CD4-positive, alpha-beta T cell (primary cell): ENCODE measurements at regions of chr2 and their contacts with region 1.

Region 1: DNA sequence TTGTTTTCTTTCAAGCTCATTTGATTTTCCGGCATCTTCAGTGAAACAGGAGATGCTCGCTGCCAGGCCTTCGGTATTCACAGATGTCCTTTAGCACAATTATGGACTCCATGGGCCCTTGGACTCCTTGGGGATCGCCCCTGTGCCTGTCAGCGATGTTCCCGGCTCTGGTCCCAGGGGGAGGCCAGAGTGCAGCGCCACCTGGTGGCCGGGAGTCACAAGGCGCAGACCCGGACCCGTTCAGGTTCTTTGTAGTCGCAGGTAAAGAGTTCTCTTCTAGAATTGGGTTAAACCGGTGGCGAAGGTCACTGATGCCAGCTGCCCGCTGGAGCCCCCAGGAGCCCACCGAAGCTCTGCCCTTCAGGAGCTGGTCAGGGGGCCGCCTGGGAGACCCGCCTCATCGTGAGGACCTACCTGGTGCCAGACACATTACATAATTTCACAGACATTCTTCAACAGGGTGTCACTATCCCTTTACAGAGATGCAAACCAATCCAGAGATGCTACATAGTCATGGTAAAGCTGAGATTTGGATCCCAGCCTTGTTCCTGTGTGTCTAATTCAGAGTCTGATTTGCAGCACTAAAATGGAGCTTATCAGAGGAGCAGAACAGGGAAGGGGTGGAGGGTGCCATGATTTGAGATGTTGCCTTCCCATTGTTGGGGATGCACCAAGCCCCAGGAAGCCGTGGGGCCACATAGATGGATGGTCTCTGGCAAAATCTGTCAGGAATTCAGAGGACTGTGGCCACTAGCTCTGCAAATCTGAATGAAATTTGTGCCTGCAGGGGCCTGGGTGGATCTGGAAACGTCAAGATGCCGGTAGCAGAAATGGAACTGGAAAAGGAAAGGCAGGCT is 6.0 kb upstream of the INPP5D start:
- DNase-seq: peak; percentile 43 to 85 (median 63)
- ATAC-seq: peak; percentile 73
- H3K4me3 ChIP-seq: no peak overlapping the region
- H3K4me3 Mint-ChIP-seq: no peak overlapping the region
- H3K27ac ChIP-seq: no peak overlapping the region
- H3K27ac Mint-ChIP-seq: no peak overlapping the region
- H3K4me1 ChIP-seq: peaks cover 20% of the 10 kb centered on the region
- H3K4me1 Mint-ChIP-seq: peaks cover 15% of the 10 kb centered on the region
- H3K27me3 ChIP-seq: no peaks in the 10 kb centered on the region
- H3K27me3 Mint-ChIP-seq: no peaks in the 10 kb centered on the region
- CTCF ChIP-seq: peak; percentile 98

Region 2: GRCh38 chr2:232604535-232604934 is 449.6 kb before region 1 on chr2:
- CTCF ChIA-PET with region 1: no interaction called
- POLR2A ChIA-PET with region 1: no interaction called
- intact Hi-C with region 1: loop called in 1 of 2 experiments (anchors 2 kb)
- DNase-seq: no peak
- ATAC-seq: no peak
- H3K4me3 ChIP-seq: no peak overlapping the region
- H3K4me3 Mint-ChIP-seq: no peak overlapping the region
- H3K27ac ChIP-seq: no peak overlapping the region
- H3K27ac Mint-ChIP-seq: no peak overlapping the region
- H3K4me1 ChIP-seq: peaks cover 9% of the 10 kb centered on the region
- H3K4me1 Mint-ChIP-seq: peaks cover 9% of the 10 kb centered on the region
- H3K27me3 ChIP-seq: no peaks in the 10 kb centered on the region
- H3K27me3 Mint-ChIP-seq: no peaks in the 10 kb centered on the region
- CTCF ChIP-seq: no peak

Region 3: DNA sequence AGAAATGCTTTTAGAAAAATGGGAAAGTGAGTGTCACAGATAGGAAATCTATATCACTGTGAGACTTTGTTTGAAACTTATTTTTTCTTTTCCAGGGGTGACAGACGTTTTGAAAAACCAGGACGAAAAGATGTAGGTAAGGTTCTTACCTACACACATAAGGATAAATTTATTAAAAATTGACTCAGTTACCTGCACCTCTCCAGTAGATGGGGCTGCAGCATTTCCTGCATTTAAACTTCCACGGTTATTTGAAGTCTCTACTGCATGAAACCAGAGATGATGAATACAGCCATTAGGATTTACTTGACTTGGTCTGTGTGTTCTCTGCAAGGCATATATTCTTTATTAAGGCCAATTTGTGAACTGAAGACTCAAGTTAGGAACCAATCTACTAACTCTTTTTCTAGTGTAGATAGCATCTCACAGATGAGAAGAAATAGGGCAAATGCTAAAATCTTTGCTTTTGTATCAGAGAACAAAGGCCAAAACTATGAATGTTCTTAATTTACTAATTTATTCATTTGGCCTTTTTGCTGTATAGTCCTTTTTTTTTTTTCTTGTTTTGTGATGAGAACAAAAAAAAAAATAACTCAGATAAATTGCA is 292.8 kb before region 1 on chr2:
- CTCF ChIA-PET with region 1: no interaction called
- POLR2A ChIA-PET with region 1: no interaction called
- intact Hi-C with region 1: loop called in 1 of 2 experiments (anchors 5 kb)
- DNase-seq: peak in 10 of 14 experiments; percentile 3 to 65 (median 30)
- ATAC-seq: peak; percentile 76
- H3K4me3 ChIP-seq: no peak overlapping the region
- H3K4me3 Mint-ChIP-seq: no peak overlapping the region
- H3K27ac ChIP-seq: no peak overlapping the region
- H3K27ac Mint-ChIP-seq: no peak overlapping the region
- H3K4me1 ChIP-seq: peaks cover 4% of the 10 kb centered on the region
- H3K4me1 Mint-ChIP-seq: peaks cover 19% of the 10 kb centered on the region
- H3K27me3 ChIP-seq: no peaks in the 10 kb centered on the region
- H3K27me3 Mint-ChIP-seq: no peaks in the 10 kb centered on the region
- CTCF ChIP-seq: peak; percentile 62

Region 4: DNA sequence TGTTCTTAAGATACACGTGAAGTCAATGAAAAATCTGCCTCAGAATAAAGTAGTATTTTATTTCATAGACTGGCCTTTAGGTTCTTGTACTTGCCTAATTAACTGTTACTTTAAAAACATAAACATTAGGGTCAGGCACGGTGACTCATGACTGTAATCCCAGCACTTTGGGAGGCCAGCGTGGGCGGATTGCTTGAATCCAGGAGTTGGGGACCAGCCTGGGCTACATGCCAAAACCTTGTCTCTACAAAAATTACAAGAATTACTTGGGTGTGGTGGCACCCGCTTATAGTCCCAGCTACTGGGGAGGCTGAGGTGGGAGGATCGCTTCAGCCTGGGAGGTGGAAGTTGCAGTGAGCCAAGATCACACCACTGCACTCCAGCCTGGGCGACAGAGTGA is 200.1 kb before region 1 on chr2:
- CTCF ChIA-PET with region 1: no interaction called
- POLR2A ChIA-PET with region 1: no interaction called
- intact Hi-C with region 1: loop called in 1 of 2 experiments (anchors 10 kb)
- DNase-seq: no peak
- ATAC-seq: no peak
- H3K4me3 ChIP-seq: no peak overlapping the region
- H3K4me3 Mint-ChIP-seq: no peak overlapping the region
- H3K27ac ChIP-seq: no peak overlapping the region
- H3K27ac Mint-ChIP-seq: peak overlapping the region; percentile 25
- H3K4me1 ChIP-seq: no peaks in the 10 kb centered on the region
- H3K4me1 Mint-ChIP-seq: no peaks in the 10 kb centered on the region
- H3K27me3 ChIP-seq: no peaks in the 10 kb centered on the region
- H3K27me3 Mint-ChIP-seq: no peaks in the 10 kb centered on the region
- CTCF ChIP-seq: no peak

Region 5: GRCh38 chr2:233084488-233084887 is 30.3 kb after region 1 on chr2:
- CTCF ChIA-PET with region 1: interaction called, 3 read pairs
- POLR2A ChIA-PET with region 1: interaction called, 190 read pairs
- intact Hi-C with region 1: loop called in 1 of 2 experiments (anchors 5 kb)
- DNase-seq: peak in 9 of 14 experiments; percentile 31 to 83 (median 53)
- ATAC-seq: peak; percentile 32
- H3K4me3 ChIP-seq: peak overlapping the region; percentile 19
- H3K4me3 Mint-ChIP-seq: peak overlapping the region; percentile 83
- H3K27ac ChIP-seq: peak overlapping the region; percentile 67 to 71
- H3K27ac Mint-ChIP-seq: peak overlapping the region; percentile 85
- H3K4me1 ChIP-seq: peaks cover 94% of the 10 kb centered on the region
- H3K4me1 Mint-ChIP-seq: peaks cover 88% of the 10 kb centered on the region
- H3K27me3 ChIP-seq: no peaks in the 10 kb centered on the region
- H3K27me3 Mint-ChIP-seq: no peaks in the 10 kb centered on the region
- CTCF ChIP-seq: no peak